Colonic mucosa (tissue), 4 donors: ENCODE measurements at regions of chr4 and their contacts with region 1.

Region 1: DNA sequence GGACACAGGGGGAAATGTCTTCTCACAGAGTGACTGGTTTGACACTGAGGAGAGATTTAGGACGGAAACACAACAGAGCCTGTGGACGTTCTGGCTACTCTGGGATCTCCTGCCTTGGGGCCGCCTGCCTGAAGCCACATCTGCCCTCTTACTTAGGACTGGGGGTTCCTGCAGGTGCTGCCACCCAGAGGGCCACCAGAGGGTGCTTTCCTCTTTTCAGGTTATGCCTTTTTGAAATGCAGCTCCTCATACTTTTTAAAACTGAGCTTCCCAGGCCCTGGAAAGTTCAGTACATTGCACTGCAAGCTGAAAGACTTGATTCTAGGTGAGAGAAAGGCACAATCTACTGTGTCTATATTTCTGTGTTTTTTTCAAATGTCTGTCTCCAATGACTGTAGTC is 92.2 kb upstream of the PGRMC2 start:
- DNase-seq: no peak
- H3K4me3 ChIP-seq: no peak overlapping the region
- H3K27ac ChIP-seq: no peak overlapping the region
- H3K4me1 ChIP-seq: no peaks in the 10 kb centered on the region
- H3K27me3 ChIP-seq: no peaks in the 10 kb centered on the region
- CTCF ChIP-seq: peak; percentile 39

Region 2: DNA sequence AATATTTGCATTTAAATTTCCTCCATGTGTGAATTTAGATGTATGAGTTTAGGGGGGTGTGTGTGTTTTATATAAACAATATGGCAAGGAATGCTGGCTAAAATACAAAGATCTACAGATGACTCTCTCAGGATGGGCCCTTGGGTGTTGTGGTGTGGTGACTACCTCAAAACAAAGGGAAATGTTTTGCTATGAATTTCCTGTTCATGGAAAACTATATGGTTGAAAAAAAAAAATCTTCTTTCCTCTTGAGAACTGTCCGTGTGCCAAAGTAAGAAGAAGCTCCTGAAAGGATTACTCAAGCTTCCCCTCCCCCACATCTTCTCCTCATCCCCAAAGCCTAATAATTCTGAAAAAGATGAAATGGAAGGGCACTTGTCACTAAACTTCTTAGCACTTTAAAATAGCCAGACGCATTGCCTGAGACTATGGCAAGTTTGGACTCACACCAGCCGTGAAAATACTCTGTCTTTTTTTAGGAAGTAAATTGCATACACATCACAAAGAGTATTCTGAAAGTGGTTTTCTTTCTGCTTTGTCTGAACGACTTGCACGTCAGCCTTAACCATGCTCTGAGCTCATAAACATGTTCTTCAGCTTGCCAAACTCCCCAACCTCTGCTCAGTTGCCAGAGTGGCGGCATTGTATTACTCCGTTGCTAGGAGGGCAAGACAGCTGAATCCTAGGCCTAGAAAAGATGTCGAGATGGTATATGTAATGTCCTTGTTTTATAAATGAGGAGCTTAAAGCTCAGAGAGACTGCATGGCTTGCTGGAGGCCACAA is 179.2 kb after region 1 on chr4:
- intact Hi-C with region 1: loop called (anchors 10 kb)
- DNase-seq: no peak
- H3K4me3 ChIP-seq: no peak overlapping the region
- H3K27ac ChIP-seq: no peak overlapping the region
- H3K4me1 ChIP-seq: peaks cover 1% of the 10 kb centered on the region
- H3K27me3 ChIP-seq: no peaks in the 10 kb centered on the region
- CTCF ChIP-seq: no peak

Region 3: GRCh38 chr4:128863312-128864075 is 483.6 kb after region 1 on chr4:
- intact Hi-C with region 1: no loop called
- DNase-seq: peak; percentile 86
- H3K4me3 ChIP-seq: no peak overlapping the region
- H3K27ac ChIP-seq: no peak overlapping the region
- H3K4me1 ChIP-seq: no peaks in the 10 kb centered on the region
- H3K27me3 ChIP-seq: no peaks in the 10 kb centered on the region
- CTCF ChIP-seq: peak; percentile 83